ENCODE measurements at regions of chr20 and their contacts with region 1.

Region 1: DNA sequence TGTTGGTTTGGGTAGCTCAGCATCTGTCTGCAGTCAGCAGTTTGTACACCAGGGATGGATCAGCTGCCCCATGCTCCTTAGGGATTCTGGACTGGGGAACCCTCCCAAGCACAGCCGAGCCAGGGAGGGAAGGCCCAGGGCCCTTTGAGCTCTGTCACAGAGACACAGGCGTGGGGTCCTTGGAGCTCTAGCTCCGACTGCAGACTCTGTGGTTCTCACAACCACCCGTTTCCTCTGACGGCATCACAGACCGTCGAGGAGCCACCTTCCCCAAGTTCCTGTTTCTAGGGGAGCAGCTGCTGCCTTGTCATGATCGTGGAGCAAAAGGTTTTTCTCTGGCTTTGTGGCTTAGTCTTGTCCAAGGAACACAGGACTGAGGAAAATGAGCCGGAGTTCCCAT is at the start of gene SLA2:
- DNase-seq: peak; percentile 65 to 85 (median 71)
- H3K4me3 ChIP-seq: peak within 1 kb of the TSS; percentile 75 to 83
- H3K4me3 Mint-ChIP-seq: peak within 1 kb of the TSS; percentile 92 to 99 (median 98)
- H3K27ac ChIP-seq: peak within 1 kb of the TSS; percentile 77
- H3K27ac Mint-ChIP-seq: peak within 1 kb of the TSS; percentile 97 to 99 (median 98)
- H3K4me1 ChIP-seq: peaks cover 47% of the 10 kb centered on the region
- H3K4me1 Mint-ChIP-seq: peaks cover 28 to 67% (median 49%) of the 10 kb centered on the region in 4 donors
- H3K27me3 ChIP-seq: no peaks in the 10 kb centered on the region
- H3K27me3 Mint-ChIP-seq: no peaks in the 10 kb centered on the region
- total RNA-seq, gene SLA2: 28.7 to 29.9 TPM

Region 2: GRCh38 chr20:36305602-36306551 is 340.1 kb before region 1 on chr20 and contains the start of gene DLGAP4:
- CTCF ChIA-PET with region 1: no interaction called
- POLR2A ChIA-PET with region 1: no interaction called
- intact Hi-C with region 1: no loop called
- DNase-seq: no peak
- H3K4me3 ChIP-seq: no peak within 1 kb of the TSS
- H3K4me3 Mint-ChIP-seq: peak within 1 kb of the TSS; percentile 71 to 87 (median 82)
- H3K27ac ChIP-seq: no peak within 1 kb of the TSS
- H3K27ac Mint-ChIP-seq: peak within 1 kb of the TSS in 2 of 7 donors; percentile 7 to 29
- H3K4me1 ChIP-seq: no peaks in the 10 kb centered on the region
- H3K4me1 Mint-ChIP-seq: peaks cover 2 to 19% (median 4%) of the 10 kb centered on the region in 4 donors
- H3K27me3 ChIP-seq: peaks cover 15% of the 10 kb centered on the region
- H3K27me3 Mint-ChIP-seq: peaks cover 45 to 61% of the 10 kb centered on the region in 2 donors
- total RNA-seq, gene DLGAP4: 38.1 to 50.2 TPM

Region 3: DNA sequence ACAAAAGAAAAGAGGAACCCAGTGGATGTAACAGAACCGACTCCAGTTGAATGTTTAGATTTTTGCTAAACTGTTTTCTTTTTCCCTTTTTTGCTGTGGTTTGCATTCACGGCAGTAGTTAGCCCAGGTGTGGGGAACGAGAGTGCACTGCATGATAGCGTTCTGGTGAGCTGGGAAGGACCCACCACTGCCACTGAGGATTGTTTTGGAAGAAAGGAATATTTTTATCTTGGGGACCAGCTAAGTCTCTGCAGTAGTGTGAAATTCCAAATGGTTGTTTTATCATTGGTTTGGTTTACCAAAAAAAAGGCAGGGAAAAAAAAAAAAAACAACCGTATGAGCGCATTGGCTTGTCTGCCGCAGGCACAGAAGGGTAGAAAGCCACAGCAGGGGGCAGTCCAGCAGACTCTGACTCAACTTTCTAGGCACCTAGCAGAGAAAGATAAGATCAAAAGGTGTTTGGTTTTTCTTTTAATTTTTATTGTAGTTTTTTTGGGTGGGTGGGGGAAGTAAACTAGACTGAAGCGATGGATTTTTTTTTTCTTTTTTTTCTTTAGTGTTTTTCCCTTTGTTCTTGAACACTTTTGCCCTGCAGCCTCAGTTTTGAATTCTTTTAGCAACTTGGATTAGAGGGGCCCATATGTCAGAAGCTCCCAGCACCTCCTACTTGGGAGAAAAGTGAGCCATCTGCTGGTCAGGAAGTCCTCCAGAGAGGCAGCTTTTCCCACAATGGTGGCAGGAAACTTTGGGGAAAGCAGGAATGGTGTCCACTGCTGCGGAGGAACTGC is 54.0 kb before region 1 on chr20:
- CTCF ChIA-PET with region 1: interaction called, 6 read pairs
- POLR2A ChIA-PET with region 1: interaction called, 10 read pairs
- intact Hi-C with region 1: no loop called
- DNase-seq: peak; percentile 51 to 87 (median 63)
- H3K4me3 ChIP-seq: no peak overlapping the region
- H3K4me3 Mint-ChIP-seq: peak overlapping the region in 7 of 8 donors; percentile 26 to 77 (median 57)
- H3K27ac ChIP-seq: peak overlapping the region; percentile 38
- H3K27ac Mint-ChIP-seq: peak overlapping the region; percentile 77 to 93 (median 86)
- H3K4me1 ChIP-seq: peaks cover 51% of the 10 kb centered on the region
- H3K4me1 Mint-ChIP-seq: peaks cover 29 to 64% (median 44%) of the 10 kb centered on the region in 4 donors
- H3K27me3 ChIP-seq: no peaks in the 10 kb centered on the region
- H3K27me3 Mint-ChIP-seq: no peaks in the 10 kb centered on the region

Region 4: GRCh38 chr20:36629719-36630681 is 16.0 kb before region 1 on chr20:
- CTCF ChIA-PET with region 1: interaction called, 25 read pairs
- POLR2A ChIA-PET with region 1: interaction called, 90 read pairs
- intact Hi-C with region 1: loop called (anchors 1 kb)
- DNase-seq: peak; percentile 37 to 52 (median 43)
- H3K4me3 ChIP-seq: peak overlapping the region in 1 of 2 donors; percentile 27
- H3K4me3 Mint-ChIP-seq: peak overlapping the region; percentile 75 to 91 (median 80)
- H3K27ac ChIP-seq: peak overlapping the region; percentile 36
- H3K27ac Mint-ChIP-seq: peak overlapping the region; percentile 94 to 98 (median 96)
- H3K4me1 ChIP-seq: peaks cover 32% of the 10 kb centered on the region
- H3K4me1 Mint-ChIP-seq: peaks cover 21 to 61% (median 45%) of the 10 kb centered on the region in 4 donors
- H3K27me3 ChIP-seq: no peaks in the 10 kb centered on the region
- H3K27me3 Mint-ChIP-seq: no peaks in the 10 kb centered on the region

Region 5: GRCh38 chr20:36728986-36729385 is 83.0 kb after region 1 on chr20:
- CTCF ChIA-PET with region 1: no interaction called
- POLR2A ChIA-PET with region 1: interaction called, 15 read pairs
- intact Hi-C with region 1: no loop called
- DNase-seq: no peak
- H3K4me3 ChIP-seq: no peak overlapping the region
- H3K4me3 Mint-ChIP-seq: no peak overlapping the region
- H3K27ac ChIP-seq: no peak overlapping the region
- H3K27ac Mint-ChIP-seq: peak overlapping the region in 1 of 7 donors; percentile 84
- H3K4me1 ChIP-seq: peaks cover 14% of the 10 kb centered on the region
- H3K4me1 Mint-ChIP-seq: peaks cover 18 to 31% (median 25%) of the 10 kb centered on the region in 4 donors
- H3K27me3 ChIP-seq: no peaks in the 10 kb centered on the region
- H3K27me3 Mint-ChIP-seq: no peaks in the 10 kb centered on the region

Region 6: GRCh38 chr20:36886859-36887751 is 241.1 kb after region 1 on chr20:
- CTCF ChIA-PET with region 1: no interaction called
- POLR2A ChIA-PET with region 1: no interaction called
- intact Hi-C with region 1: no loop called
- DNase-seq: peak; percentile 67 to 74 (median 72)
- H3K4me3 ChIP-seq: no peak overlapping the region
- H3K4me3 Mint-ChIP-seq: peak overlapping the region in 4 of 8 donors; percentile 26 to 51 (median 30)
- H3K27ac ChIP-seq: no peak overlapping the region
- H3K27ac Mint-ChIP-seq: peak overlapping the region; percentile 42 to 87 (median 81)
- H3K4me1 ChIP-seq: peaks cover 12% of the 10 kb centered on the region
- H3K4me1 Mint-ChIP-seq: peaks cover 12 to 22% (median 14%) of the 10 kb centered on the region in 4 donors
- H3K27me3 ChIP-seq: no peaks in the 10 kb centered on the region
- H3K27me3 Mint-ChIP-seq: no peaks in the 10 kb centered on the region

Region 7: GRCh38 chr20:36941401-36941835 is 295.4 kb after region 1 on chr20:
- CTCF ChIA-PET with region 1: no interaction called
- POLR2A ChIA-PET with region 1: no interaction called
- intact Hi-C with region 1: no loop called
- DNase-seq: no peak
- H3K4me3 ChIP-seq: peak overlapping the region in 1 of 2 donors; percentile 26
- H3K4me3 Mint-ChIP-seq: peak overlapping the region; percentile 67 to 90 (median 72)
- H3K27ac ChIP-seq: peak overlapping the region; percentile 69
- H3K27ac Mint-ChIP-seq: peak overlapping the region; percentile 90 to 100 (median 99)
- H3K4me1 ChIP-seq: peaks cover 96% of the 10 kb centered on the region
- H3K4me1 Mint-ChIP-seq: peaks cover 48 to 84% (median 65%) of the 10 kb centered on the region in 4 donors
- H3K27me3 ChIP-seq: no peaks in the 10 kb centered on the region
- H3K27me3 Mint-ChIP-seq: no peaks in the 10 kb centered on the region

Measured in CD4-positive, alpha-beta memory T cell (primary cell).